SK-N-SH (cell line): ENCODE measurements at regions of chr3 and their contacts with region 1.

Region 1: DNA sequence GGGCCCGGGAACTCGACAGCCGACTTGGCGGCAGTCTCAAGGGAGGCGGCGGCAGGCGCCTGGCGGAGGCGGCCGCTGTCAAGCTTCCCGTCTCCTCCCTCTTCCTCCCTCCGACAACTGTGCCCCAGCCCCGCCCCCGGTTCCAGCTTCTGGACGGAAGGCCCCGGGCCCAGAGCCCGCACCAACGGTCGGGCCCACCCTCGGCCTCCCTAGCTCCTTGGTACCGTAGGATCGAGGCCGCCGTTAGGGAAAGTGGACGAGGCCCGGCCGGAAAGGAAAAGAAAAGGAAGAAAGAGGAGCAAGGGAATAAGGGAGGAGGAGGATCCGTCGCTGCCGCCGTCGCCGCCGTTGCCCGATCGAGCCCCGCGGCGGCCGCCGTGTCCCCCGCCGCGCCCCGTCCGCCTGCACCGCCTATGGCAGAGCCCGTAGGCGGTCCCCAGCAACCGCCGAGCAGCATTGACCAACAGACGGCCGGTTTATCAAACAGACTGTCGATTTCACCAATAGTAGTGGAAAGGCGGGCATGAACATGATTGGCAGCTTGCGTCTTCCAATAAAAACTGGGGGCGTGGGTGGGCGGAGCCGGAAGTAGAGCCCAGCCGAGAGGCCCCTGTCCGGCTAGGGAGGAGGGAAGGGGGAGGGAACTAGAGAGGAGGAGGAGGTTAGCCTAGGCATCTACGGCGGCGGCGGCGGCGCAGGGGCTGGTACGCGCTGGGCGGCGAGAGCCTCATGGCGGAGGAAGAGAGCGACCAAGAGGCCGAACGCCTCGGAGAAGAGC is at the starts of genes CGGBP1 and ZNF654:
- DNase-seq: peak; percentile 97
- H3K4me3 ChIP-seq: peak within 1 kb of the TSS; percentile 93 to 95
- H3K27ac ChIP-seq: peak within 1 kb of the TSS; percentile 91 to 98
- H3K4me1 ChIP-seq: peaks cover 7 to 16% of the 10 kb centered on the region in 2 experiments; a peak in 2 of 4 replicates
- H3K27me3 ChIP-seq: no peaks in the 10 kb centered on the region
- CTCF ChIP-seq: no peak
- EP300 ChIP-seq: peak in 1 of 2 experiments; percentile 7; a peak in 1 of 4 replicates
- RAD21 ChIP-seq: no peak
- polyA plus RNA-seq, gene CGGBP1: 34.5 and 38.3 TPM in 2 replicates
- polyA plus RNA-seq, gene ZNF654: 1.6 and 1.7 TPM in 2 replicates

Region 2: DNA sequence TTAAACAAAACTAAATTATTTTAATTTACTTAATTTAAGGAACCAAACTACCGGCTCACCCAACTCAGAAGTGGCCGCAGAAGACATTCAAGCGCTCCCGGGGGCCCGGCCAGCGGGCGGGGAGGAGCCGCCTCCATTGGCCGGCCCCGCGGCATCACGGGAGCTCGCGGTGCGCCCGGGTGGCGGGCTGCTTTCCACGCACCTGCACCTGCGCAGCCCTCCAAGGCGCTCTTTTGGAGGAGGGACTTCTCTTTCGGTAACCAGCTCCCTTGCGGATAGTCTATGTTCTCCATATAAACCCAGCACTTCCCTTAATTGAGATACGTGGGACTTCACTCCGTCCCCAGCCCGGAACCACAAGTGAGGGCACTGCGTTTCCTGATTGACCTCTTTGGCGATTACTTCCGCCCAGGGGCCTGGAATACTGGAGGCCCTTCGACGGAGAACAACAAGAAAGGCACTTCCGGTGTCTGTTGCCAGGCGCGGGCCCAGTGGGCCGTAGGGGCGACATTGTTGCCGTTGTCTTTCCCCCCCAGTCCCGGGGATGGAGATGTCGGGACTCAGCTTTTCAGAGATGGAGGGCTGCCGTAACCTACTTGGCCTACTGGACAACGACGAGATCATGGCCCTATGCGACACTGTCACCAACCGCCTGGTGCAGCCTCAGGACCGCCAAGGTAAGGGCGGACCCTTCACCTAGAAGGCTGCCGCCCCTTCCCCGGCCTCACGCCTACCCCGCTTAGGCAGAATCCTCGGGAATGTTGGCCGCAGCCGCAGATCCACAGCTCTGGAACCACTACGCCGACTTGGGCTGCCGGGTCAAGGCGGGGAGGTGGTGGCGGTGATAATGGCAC is 91.0 kb after region 1 on chr3 and contains the start of gene C3orf38:
- CTCF ChIA-PET with region 1: no interaction called
- POLR2A ChIA-PET with region 1: interaction called, 17 read pairs
- DNase-seq: peak; percentile 88
- H3K4me3 ChIP-seq: peak within 1 kb of the TSS; percentile 98 to 100
- H3K27ac ChIP-seq: peak within 1 kb of the TSS; percentile 88 to 97
- H3K4me1 ChIP-seq: peaks cover 4 to 14% of the 10 kb centered on the region in 2 experiments; a peak in 3 of 4 replicates
- H3K27me3 ChIP-seq: no peaks in the 10 kb centered on the region
- CTCF ChIP-seq: no peak
- EP300 ChIP-seq: no peak; a peak in 1 of 4 replicates
- RAD21 ChIP-seq: no peak
- polyA plus RNA-seq, gene C3orf38: 4.5 and 5.4 TPM in 2 replicates